Heart left ventricle (tissue), 16 donors: ENCODE measurements at regions of chrX and their contacts with region 1.

Region 1: DNA sequence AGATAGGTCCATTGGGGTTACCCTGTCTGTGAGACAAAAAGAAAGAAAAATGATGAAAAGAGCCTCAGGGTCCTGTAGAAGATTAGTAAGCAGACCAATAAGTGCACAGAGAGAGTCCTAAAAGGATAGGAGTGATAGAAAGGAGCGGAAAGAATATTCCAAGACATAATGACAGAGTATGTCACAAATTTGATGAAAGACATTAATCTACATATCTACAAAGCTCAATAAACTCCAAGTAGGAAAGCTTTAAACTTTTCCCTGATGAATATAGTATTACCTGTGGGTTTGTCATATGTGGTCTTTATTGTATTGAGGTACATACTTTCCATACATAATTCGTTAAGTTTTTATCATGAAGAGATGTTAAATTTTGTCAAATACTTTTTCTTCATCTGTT is 73.7 kb downstream of the MTMR8 start:
- DNase-seq: no peak
- ATAC-seq: no peak
- H3K4me3 ChIP-seq: no peak overlapping the region
- H3K27ac ChIP-seq: no peak overlapping the region
- H3K4me1 ChIP-seq: no peaks in the 10 kb centered on the region
- H3K27me3 ChIP-seq: no peaks in the 10 kb centered on the region
- CTCF ChIP-seq: no peak
- POLR2A ChIP-seq: no peak

Region 2: GRCh38 chrX:64377753-64378152 is 56.2 kb after region 1 on chrX:
- intact Hi-C with region 1: loop called in 1 of 10 experiments (anchors 10 kb)
- DNase-seq: no peak
- ATAC-seq: no peak
- H3K4me3 ChIP-seq: no peak overlapping the region
- H3K27ac ChIP-seq: no peak overlapping the region
- H3K4me1 ChIP-seq: no peaks in the 10 kb centered on the region
- H3K27me3 ChIP-seq: no peaks in the 10 kb centered on the region
- CTCF ChIP-seq: no peak
- POLR2A ChIP-seq: no peak